ENCODE measurements at regions of chr9 and their contacts with region 1.

Region 1: DNA sequence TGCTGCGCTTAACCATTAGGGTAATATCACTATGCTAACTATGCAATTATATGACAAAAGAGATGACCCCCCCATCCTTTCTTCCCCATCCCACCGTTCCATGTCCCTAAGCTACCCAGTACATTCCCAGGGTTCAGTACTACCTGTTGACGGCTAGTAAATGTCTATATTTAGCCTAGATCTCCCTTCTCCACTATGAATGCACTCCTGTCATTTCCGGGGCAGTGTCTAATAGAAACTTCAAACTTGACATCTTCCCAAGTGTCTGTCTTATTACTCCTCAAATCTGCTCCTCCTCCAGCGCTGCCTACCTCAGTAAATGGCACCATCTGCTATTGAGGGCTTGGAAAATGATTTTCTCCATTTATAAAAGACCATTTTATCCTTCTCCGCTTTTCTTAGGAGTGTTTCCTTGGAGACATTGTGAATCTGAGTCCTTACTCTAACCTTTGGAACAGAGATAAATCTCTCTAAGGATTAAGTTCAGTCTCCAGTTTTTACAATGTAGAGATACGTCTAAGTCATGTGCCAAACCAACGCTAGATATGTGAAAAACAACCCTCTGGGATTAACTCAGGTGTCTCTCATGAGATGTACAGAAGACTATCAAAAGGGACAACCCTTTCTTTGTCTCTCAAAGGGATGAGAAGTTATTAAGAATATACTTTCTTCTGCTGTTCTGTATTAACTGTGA is 114.9 kb downstream of the BNC2 start:
- DNase-seq: no peak
- H3K4me3 ChIP-seq: no peak overlapping the region
- H3K27ac ChIP-seq: no peak overlapping the region
- H3K4me1 ChIP-seq: no peaks in the 10 kb centered on the region
- H3K27me3 ChIP-seq: no peaks in the 10 kb centered on the region
- CTCF ChIP-seq: no peak
- POLR2A ChIP-seq: no peak

Region 2: GRCh38 chr9:16705121-16705604 is 50.5 kb before region 1 on chr9:
- intact Hi-C with region 1: loop called (anchors 2 kb)
- DNase-seq: peak in 1 of 2 donors; percentile 95
- H3K4me3 ChIP-seq: peak overlapping the region; percentile 34 to 48
- H3K27ac ChIP-seq: peak overlapping the region; percentile 73
- H3K4me1 ChIP-seq: peaks cover 13% of the 10 kb centered on the region
- H3K27me3 ChIP-seq: no peaks in the 10 kb centered on the region
- CTCF ChIP-seq: no peak
- POLR2A ChIP-seq: no peak